Colonic mucosa (tissue), 4 donors: ENCODE measurements at regions of chr2 and their contacts with region 1.

Region 1: GRCh38 chr2:227655454-227655853 is 11.2 kb upstream of the SCYGR5 start:
- DNase-seq: no peak
- H3K4me3 ChIP-seq: no peak overlapping the region
- H3K27ac ChIP-seq: no peak overlapping the region
- H3K4me1 ChIP-seq: no peaks in the 10 kb centered on the region
- H3K27me3 ChIP-seq: no peaks in the 10 kb centered on the region
- CTCF ChIP-seq: no peak

Region 2: GRCh38 chr2:227724394-227725045 is 69.1 kb after region 1 on chr2 and contains the start of gene SCYGR6:
- intact Hi-C with region 1: no loop called
- DNase-seq: no peak
- H3K4me3 ChIP-seq: no peak within 1 kb of the TSS
- H3K27ac ChIP-seq: no peak within 1 kb of the TSS
- H3K4me1 ChIP-seq: no peaks in the 10 kb centered on the region
- H3K27me3 ChIP-seq: no peaks in the 10 kb centered on the region
- CTCF ChIP-seq: no peak
- total RNA-seq, gene SCYGR6: not detected

Region 3: GRCh38 chr2:227862227-227862740 is 206.8 kb after region 1 on chr2:
- intact Hi-C with region 1: loop called (anchors 5 kb)
- DNase-seq: peak; percentile 63
- H3K4me3 ChIP-seq: no peak overlapping the region
- H3K27ac ChIP-seq: no peak overlapping the region
- H3K4me1 ChIP-seq: no peaks in the 10 kb centered on the region
- H3K27me3 ChIP-seq: no peaks in the 10 kb centered on the region
- CTCF ChIP-seq: peak; percentile 75

Region 4: DNA sequence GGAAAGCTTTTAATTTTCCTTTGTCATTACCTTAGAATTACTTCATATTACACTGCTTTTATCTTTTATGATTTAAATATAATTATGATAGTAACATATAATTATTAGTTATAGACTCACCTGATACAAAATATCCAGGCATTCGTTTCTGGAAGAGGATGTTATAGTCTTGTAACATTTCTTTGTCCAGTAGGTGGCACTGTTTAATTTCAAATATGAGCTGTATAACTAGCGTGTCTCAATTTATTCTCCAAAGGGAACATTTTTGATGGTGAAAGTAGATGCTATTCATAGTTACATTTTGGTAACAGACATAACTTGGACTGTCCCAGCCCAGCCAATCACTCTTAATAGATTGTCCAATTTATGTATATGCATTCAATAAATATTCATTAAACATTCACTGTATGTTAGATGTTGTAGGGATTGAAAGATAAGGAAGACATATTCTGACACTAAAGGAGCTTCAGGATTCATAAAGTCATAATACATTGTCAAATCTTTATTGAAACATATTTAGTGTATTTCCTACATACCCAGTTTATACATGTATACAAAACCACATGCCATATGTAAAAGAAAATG is 235.1 kb after region 1 on chr2:
- intact Hi-C with region 1: loop called (anchors 5 kb)
- DNase-seq: no peak
- H3K4me3 ChIP-seq: no peak overlapping the region
- H3K27ac ChIP-seq: no peak overlapping the region
- H3K4me1 ChIP-seq: no peaks in the 10 kb centered on the region
- H3K27me3 ChIP-seq: no peaks in the 10 kb centered on the region
- CTCF ChIP-seq: peak; percentile 65